GM12878 (cell line): ENCODE measurements at regions of chr19 and their contacts with region 1.

Region 1: GRCh38 chr19:13093407-13094105 is 9.1 kb downstream of the LYL1 start:
- DNase-seq: no peak
- ATAC-seq: peak; percentile 89
- H3K4me3 ChIP-seq: no peak overlapping the region
- H3K27ac ChIP-seq: no peak overlapping the region
- H3K4me1 ChIP-seq: peaks cover 17% of the 10 kb centered on the region
- H3K27me3 ChIP-seq: peaks cover 2 to 7% of the 10 kb centered on the region in 2 experiments; a peak in 3 of 4 replicates
- CTCF ChIP-seq: peak; percentile 89 to 95 (median 92)
- EP300 ChIP-seq: no peak
- POLR2A ChIP-seq: no peak
- RAD21 ChIP-seq: peak; percentile 95

Region 2: DNA sequence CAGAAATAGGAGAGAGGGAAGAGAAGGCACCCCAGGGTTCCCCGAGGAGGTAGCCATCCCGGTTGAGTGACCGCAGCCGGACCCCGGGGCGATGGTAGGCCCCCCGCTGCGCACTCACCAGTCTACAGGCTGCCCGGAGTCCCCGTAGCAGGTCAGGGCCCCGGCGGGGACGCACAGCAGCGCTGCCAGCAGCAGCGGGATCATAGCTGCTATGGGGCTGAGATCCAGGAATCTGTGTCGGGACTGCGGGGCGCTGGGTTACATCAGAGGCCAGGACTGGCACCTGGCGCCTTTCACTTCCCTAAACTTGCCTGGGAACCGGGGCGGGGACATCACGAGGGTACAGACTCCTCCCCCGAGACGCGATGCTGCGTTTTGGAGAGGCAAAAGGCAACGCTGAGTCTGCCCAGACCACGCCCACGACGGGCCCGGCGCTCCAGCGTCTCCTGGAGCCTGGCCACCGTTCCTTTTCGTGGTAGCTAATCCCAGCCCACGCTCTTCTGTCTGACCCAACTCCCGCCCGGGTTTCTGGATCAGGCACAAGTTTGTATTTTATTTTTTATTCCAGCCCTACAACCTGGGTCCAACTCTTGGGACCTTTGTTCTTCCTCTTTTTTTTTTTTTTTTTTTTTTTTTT is 212.3 kb before region 1 on chr19 and contains the start of gene DNASE2:
- CTCF ChIA-PET with region 1: no interaction called
- POLR2A ChIA-PET with region 1: no interaction called
- RAD21 ChIA-PET with region 1: interaction called, 4 read pairs
- SMC1A ChIA-PET with region 1: no interaction called
- in situ Hi-C with region 1: loop called (anchors 10 kb)
- intact Hi-C with region 1: no loop called
- DNase-seq: peak; percentile 85
- ATAC-seq: peak; percentile 88
- H3K4me3 ChIP-seq: peak within 1 kb of the TSS; percentile 90
- H3K27ac ChIP-seq: peak within 1 kb of the TSS; percentile 82
- H3K4me1 ChIP-seq: peaks cover 16% of the 10 kb centered on the region
- H3K27me3 ChIP-seq: no peaks in the 10 kb centered on the region; a peak in 1 of 4 replicates
- CTCF ChIP-seq: no peak
- EP300 ChIP-seq: peak in 1 of 2 experiments; percentile 59; a peak in 1 of 4 replicates
- POLR2A ChIP-seq: peak; percentile 88
- RAD21 ChIP-seq: no peak
- polyA plus RNA-seq, gene DNASE2: 4.9 to 7.8 TPM

Region 3: GRCh38 chr19:12983542-12984142 is 109.9 kb before region 1 on chr19:
- CTCF ChIA-PET with region 1: interaction called, 145 read pairs
- POLR2A ChIA-PET with region 1: no interaction called
- RAD21 ChIA-PET with region 1: interaction called, 81 read pairs
- SMC1A ChIA-PET with region 1: interaction called, 48 read pairs
- in situ Hi-C with region 1: loop called (anchors 5 kb)
- intact Hi-C with region 1: loop called (anchors 2 kb)
- DNase-seq: no peak
- ATAC-seq: peak; percentile 71
- H3K4me3 ChIP-seq: 0 out of 2 replicates have a peak overlapping the region, but pooled peaks have one; percentile 16
- H3K27ac ChIP-seq: no peak overlapping the region
- H3K4me1 ChIP-seq: no peaks in the 10 kb centered on the region; the same call in 1 of the 2 replicates
- H3K27me3 ChIP-seq: peaks cover 0 to 3% of the 10 kb centered on the region in 2 experiments; a peak in 1 of 4 replicates
- CTCF ChIP-seq: peak; percentile 75 to 90 (median 81)
- EP300 ChIP-seq: no peak
- POLR2A ChIP-seq: no peak
- RAD21 ChIP-seq: peak; percentile 62

Region 4: GRCh38 chr19:13033819-13034611 is 59.5 kb before region 1 on chr19:
- CTCF ChIA-PET with region 1: interaction called, 15 read pairs
- POLR2A ChIA-PET with region 1: no interaction called
- RAD21 ChIA-PET with region 1: interaction called, 3 read pairs
- SMC1A ChIA-PET with region 1: no interaction called
- in situ Hi-C with region 1: no loop called
- intact Hi-C with region 1: loop called (anchors 10 kb)
- DNase-seq: no peak
- ATAC-seq: peak; percentile 95
- H3K4me3 ChIP-seq: no peak overlapping the region
- H3K27ac ChIP-seq: no peak overlapping the region
- H3K4me1 ChIP-seq: no peaks in the 10 kb centered on the region
- H3K27me3 ChIP-seq: peaks cover 0 to 2% of the 10 kb centered on the region in 2 experiments; a peak in 2 of 4 replicates
- CTCF ChIP-seq: peak; percentile 71 to 93 (median 90)
- EP300 ChIP-seq: no peak
- POLR2A ChIP-seq: no peak
- RAD21 ChIP-seq: peak; percentile 65

Region 5: GRCh38 chr19:13060964-13061927 is 32.3 kb before region 1 on chr19:
- CTCF ChIA-PET with region 1: interaction called, 39 read pairs
- POLR2A ChIA-PET with region 1: interaction called, 4 read pairs
- RAD21 ChIA-PET with region 1: interaction called, 41 read pairs
- SMC1A ChIA-PET with region 1: interaction called, 9 read pairs
- in situ Hi-C with region 1: no loop called
- intact Hi-C with region 1: no loop called
- DNase-seq: peak; percentile 11
- ATAC-seq: peak; percentile 99
- H3K4me3 ChIP-seq: peak overlapping the region; percentile 34; the same call in 1 of the 2 replicates
- H3K27ac ChIP-seq: no peak overlapping the region
- H3K4me1 ChIP-seq: no peaks in the 10 kb centered on the region
- H3K27me3 ChIP-seq: peaks cover 9 to 11% of the 10 kb centered on the region in 2 experiments
- CTCF ChIP-seq: peak; percentile 94 to 97 (median 96); a peak in 5 of 6 replicates
- EP300 ChIP-seq: no peak
- POLR2A ChIP-seq: no peak
- RAD21 ChIP-seq: peak; percentile 80

Region 6: GRCh38 chr19:13104360-13104847 is 10.8 kb after region 1 on chr19:
- CTCF ChIA-PET with region 1: interaction called, 13 read pairs
- POLR2A ChIA-PET with region 1: no interaction called
- RAD21 ChIA-PET with region 1: interaction called, 18 read pairs
- SMC1A ChIA-PET with region 1: no interaction called
- in situ Hi-C with region 1: no loop called
- intact Hi-C with region 1: no loop called
- DNase-seq: no peak
- ATAC-seq: peak; percentile 45
- H3K4me3 ChIP-seq: peak overlapping the region; percentile 61
- H3K27ac ChIP-seq: peak overlapping the region; percentile 90
- H3K4me1 ChIP-seq: peaks cover 41% of the 10 kb centered on the region
- H3K27me3 ChIP-seq: no peaks in the 10 kb centered on the region
- CTCF ChIP-seq: peak; percentile 79 to 99 (median 96)
- EP300 ChIP-seq: no peak
- POLR2A ChIP-seq: peak; percentile 72
- RAD21 ChIP-seq: peak; percentile 45; the same call in 1 of the 2 replicates